Ovary (tissue), 10 donors: ENCODE measurements at regions of chr17 and their contacts with region 1.

Region 1: GRCh38 chr17:57995076-57995956 is 7.3 kb upstream of the VEZF1 start:
- DNase-seq: peak; percentile 31 to 63 (median 48)
- H3K4me3 ChIP-seq: no peak overlapping the region
- H3K27ac ChIP-seq: peak overlapping the region in 1 of 2 donors; percentile 34
- H3K4me1 ChIP-seq: no peaks in the 10 kb centered on the region
- H3K27me3 ChIP-seq: no peaks in the 10 kb centered on the region
- CTCF ChIP-seq: peak; percentile 21 to 67 (median 65)
- EP300 ChIP-seq: no peak
- POLR2A ChIP-seq: no peak

Region 2: DNA sequence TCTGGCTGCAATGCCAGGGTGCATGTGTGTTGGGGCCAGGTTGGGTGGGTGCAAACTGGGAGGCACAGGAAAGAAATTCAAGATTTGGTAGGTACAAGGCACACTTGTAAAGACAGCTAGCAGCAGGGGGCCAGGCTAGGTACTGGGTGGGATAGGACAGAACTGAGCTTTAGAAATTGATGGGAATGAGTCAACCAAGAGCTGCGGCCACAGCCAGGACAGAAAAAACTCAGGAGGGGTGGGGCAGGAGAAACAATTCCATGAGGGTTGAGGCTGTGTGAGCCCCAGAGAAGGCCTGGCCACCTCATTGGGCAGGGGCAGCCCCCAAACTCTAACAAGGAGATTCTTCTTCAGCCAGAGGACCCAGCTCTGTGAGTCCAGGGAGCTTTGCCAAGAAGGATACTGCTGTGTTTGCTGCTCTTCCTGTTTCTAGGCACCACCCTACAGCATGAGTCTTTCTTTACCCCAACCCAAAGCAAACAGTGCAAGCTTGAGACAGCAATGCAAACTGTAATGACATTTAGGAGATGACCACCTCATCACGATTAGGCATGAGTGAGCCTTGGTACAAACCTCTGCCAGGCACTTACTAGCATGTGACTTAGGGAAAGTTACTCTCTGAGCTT is 228.9 kb before region 1 on chr17:
- intact Hi-C with region 1: no loop called
- DNase-seq: no peak
- H3K4me3 ChIP-seq: no peak overlapping the region
- H3K27ac ChIP-seq: no peak overlapping the region
- H3K4me1 ChIP-seq: no peaks in the 10 kb centered on the region
- H3K27me3 ChIP-seq: no peaks in the 10 kb centered on the region
- CTCF ChIP-seq: no peak
- EP300 ChIP-seq: no peak
- POLR2A ChIP-seq: no peak

Region 3: GRCh38 chr17:57853695-57854094 is 141.6 kb before region 1 on chr17:
- intact Hi-C with region 1: loop called in 3 of 4 experiments (anchors 2 to 5 kb)
- DNase-seq: peak in 1 of 5 donors; percentile 43
- H3K4me3 ChIP-seq: no peak overlapping the region
- H3K27ac ChIP-seq: peak overlapping the region in 1 of 2 donors; percentile 25
- H3K4me1 ChIP-seq: peaks cover 18% of the 10 kb centered on the region
- H3K27me3 ChIP-seq: no peaks in the 10 kb centered on the region
- CTCF ChIP-seq: no peak
- EP300 ChIP-seq: peak; percentile 33
- POLR2A ChIP-seq: no peak

Region 4: DNA sequence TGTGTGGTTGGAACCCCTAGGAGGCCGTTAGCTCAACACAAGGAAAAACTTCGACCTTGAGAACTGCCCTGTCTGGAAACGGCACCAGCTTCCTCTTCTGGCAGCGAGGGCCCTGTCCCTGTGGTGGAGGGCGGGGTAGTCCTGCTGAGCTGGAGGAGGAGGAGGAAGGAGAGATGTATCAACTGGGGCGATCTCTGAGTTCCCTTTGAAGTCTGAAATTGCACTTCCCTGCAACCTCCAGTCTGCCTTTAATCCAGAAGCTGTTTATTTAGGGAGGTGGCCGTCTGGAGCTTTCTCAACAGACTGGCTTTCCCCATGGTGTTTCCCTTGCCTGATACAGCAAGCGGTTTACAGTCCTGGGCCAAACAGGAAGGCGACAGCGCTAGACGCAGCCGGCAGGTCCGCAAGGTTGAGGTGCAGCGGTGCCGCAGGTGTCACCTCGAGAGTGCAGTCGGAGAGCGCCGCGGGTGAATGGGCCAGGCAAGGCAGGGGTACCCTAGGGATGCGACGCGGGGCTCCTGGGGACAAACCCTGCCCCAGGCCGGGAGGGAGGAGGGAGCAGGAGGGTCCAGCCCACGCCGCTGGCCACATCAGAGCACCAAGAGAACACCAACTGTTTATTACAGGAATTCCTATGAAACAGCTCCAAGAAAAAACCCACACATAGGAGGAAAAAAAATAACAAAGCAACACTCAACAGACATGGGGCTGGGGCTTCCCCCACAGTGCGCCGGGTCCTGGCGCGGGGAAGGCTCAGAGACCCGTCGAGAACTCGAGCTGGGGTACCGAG is 134.1 kb before region 1 on chr17:
- intact Hi-C with region 1: loop called (anchors 2 to 5 kb)
- DNase-seq: peak in 1 of 5 donors; percentile 41
- H3K4me3 ChIP-seq: peak overlapping the region; percentile 52
- H3K27ac ChIP-seq: peak overlapping the region in 1 of 2 donors; percentile 8
- H3K4me1 ChIP-seq: peaks cover 12% of the 10 kb centered on the region
- H3K27me3 ChIP-seq: no peaks in the 10 kb centered on the region
- CTCF ChIP-seq: no peak
- EP300 ChIP-seq: no peak
- POLR2A ChIP-seq: no peak